Activated CD8-positive, alpha-beta T cell treated with anti-CD3 and anti-CD28 coated beads for 36 hours (primary cell): ENCODE measurements at regions of chr3 and their contacts with region 1.

Region 1: GRCh38 chr3:111717601-111718000 is 122.5 kb upstream of the ZBED2 start:
- DNase-seq: peak; percentile 84
- ATAC-seq: peak; percentile 94
- H3K4me3 Mint-ChIP-seq: no peak overlapping the region
- H3K27ac Mint-ChIP-seq: no peak overlapping the region
- H3K4me1 Mint-ChIP-seq: no peaks in the 10 kb centered on the region
- H3K27me3 Mint-ChIP-seq: no peaks in the 10 kb centered on the region
- CTCF ChIP-seq: peak; percentile 85

Region 2: GRCh38 chr3:111577794-111578685 is 139.6 kb before region 1 on chr3:
- CTCF ChIA-PET with region 1: interaction called, 30 read pairs
- POLR2A ChIA-PET with region 1: no interaction called
- intact Hi-C with region 1: no loop called
- DNase-seq: no peak
- ATAC-seq: peak; percentile 88
- H3K4me3 Mint-ChIP-seq: no peak overlapping the region
- H3K27ac Mint-ChIP-seq: peak overlapping the region; percentile 73
- H3K4me1 Mint-ChIP-seq: peaks cover 80% of the 10 kb centered on the region
- H3K27me3 Mint-ChIP-seq: no peaks in the 10 kb centered on the region
- CTCF ChIP-seq: peak; percentile 64

Region 3: DNA sequence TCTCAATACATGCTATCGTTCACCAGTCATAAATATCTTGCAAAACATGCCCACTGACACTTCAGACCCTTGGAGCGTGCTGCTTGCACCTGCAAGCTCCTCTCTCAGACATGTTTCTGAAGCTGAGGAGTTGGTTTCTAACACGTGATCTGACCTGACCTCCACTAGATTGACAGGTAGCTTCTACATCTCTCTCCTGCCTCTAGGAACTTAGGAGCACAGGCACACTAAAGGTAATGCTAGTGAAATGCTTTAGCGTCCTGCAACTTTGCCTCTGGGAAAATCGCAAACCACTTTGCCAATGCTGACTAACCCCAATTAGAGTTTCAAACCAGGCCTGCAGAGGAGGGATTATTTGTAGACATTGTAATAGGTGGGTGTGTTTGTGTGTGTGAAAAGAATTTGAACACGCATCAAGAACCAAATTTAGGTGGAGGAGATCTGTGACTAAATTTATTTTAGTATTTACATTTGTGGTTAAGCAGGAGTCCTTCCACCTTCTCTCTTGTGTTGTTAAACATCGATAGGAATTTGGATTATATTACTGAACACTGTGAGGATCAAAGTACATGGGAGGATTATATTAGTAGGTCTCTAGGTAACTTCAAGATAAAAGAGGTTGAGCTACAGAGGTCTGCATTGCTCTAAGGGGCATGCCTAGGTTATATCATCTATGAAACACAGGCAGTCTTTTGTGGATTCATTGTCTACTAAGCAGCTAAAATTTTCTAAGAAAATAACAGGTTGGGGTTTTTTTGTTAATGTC is 35.8 kb before region 1 on chr3:
- CTCF ChIA-PET with region 1: interaction called, 10 read pairs
- POLR2A ChIA-PET with region 1: interaction called, 3 read pairs
- intact Hi-C with region 1: no loop called
- DNase-seq: no peak
- ATAC-seq: no peak
- H3K4me3 Mint-ChIP-seq: no peak overlapping the region
- H3K27ac Mint-ChIP-seq: no peak overlapping the region
- H3K4me1 Mint-ChIP-seq: peaks cover 70% of the 10 kb centered on the region
- H3K27me3 Mint-ChIP-seq: no peaks in the 10 kb centered on the region
- CTCF ChIP-seq: no peak

Region 4: GRCh38 chr3:111700054-111700453 is 17.5 kb before region 1 on chr3:
- CTCF ChIA-PET with region 1: interaction called, 65 read pairs
- POLR2A ChIA-PET with region 1: no interaction called
- intact Hi-C with region 1: no loop called
- DNase-seq: peak; percentile 23
- ATAC-seq: peak; percentile 18
- H3K4me3 Mint-ChIP-seq: peak overlapping the region; percentile 34
- H3K27ac Mint-ChIP-seq: peak overlapping the region; percentile 75
- H3K4me1 Mint-ChIP-seq: peaks cover 32% of the 10 kb centered on the region
- H3K27me3 Mint-ChIP-seq: no peaks in the 10 kb centered on the region
- CTCF ChIP-seq: no peak

Region 5: DNA sequence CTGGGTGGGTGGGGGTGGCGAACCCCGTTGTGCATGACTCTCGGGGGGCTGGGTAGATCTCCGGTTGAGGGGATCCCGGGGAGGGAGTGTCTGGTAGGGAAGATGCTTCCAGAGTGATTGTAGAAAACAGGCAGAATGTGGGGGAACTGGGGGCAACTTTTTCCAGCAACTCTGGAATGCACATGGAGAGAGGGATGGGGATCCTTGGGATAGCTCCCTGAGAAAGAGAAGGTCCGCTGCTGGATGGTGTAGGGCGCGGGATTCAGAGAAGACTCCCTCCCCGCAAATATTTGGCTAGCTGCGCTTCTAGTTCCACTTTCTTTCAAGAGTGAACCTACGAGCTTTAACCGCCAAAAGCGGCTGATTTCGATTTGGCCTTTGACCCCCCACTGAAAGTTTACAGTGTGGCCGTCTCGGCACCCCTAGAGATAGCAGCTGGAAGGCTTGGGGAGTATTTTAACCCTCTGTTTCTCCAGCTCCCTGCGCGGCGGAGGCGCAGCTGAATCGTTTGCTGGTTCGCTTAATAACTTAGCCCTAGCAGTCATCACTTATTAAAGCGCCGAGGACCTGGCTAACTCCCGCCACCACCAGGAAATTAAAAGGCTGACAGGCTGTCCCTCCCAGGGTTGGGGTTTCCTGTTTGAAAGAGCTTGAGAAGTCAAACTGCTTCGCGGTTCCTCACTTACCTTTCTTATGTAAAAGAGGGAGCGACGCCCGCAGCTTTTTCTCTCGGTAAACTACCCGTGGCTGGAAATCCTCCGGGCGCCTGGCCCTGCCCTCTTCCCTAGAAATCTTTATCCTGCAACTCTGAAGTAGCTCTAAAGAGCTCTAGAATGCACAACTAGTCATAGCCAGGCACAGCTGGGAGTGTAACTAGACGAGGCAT is 142.6 kb after region 1 on chr3:
- CTCF ChIA-PET with region 1: interaction called, 58 read pairs
- POLR2A ChIA-PET with region 1: no interaction called
- intact Hi-C with region 1: loop called (anchors 10 kb)
- DNase-seq: peak; percentile 75
- ATAC-seq: peak; percentile 72
- H3K4me3 Mint-ChIP-seq: peak overlapping the region; percentile 92
- H3K27ac Mint-ChIP-seq: peak overlapping the region; percentile 57
- H3K4me1 Mint-ChIP-seq: peaks cover 7% of the 10 kb centered on the region
- H3K27me3 Mint-ChIP-seq: peaks cover 22% of the 10 kb centered on the region
- CTCF ChIP-seq: peak; percentile 47

Region 6: DNA sequence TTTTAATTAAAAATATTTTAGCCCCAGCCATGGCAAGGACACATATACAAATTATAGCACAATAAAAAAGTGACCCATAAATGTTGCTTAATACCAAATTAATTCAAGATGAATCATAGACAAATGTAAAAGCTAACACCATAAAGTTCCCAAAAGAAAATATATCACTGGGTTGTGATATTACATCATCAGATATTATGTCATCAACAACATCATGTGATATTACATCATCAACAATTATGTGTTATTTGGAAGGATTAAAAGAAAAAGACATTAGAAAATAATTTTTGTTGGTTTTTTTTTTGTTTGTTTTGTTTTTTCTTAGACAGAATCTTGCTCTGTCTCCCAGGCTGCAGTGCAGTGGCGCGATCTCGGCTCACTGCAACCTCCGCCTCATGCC is 226.8 kb after region 1 on chr3:
- CTCF ChIA-PET with region 1: no interaction called
- POLR2A ChIA-PET with region 1: no interaction called
- intact Hi-C with region 1: no loop called
- DNase-seq: no peak
- ATAC-seq: no peak
- H3K4me3 Mint-ChIP-seq: no peak overlapping the region
- H3K27ac Mint-ChIP-seq: no peak overlapping the region
- H3K4me1 Mint-ChIP-seq: no peaks in the 10 kb centered on the region
- H3K27me3 Mint-ChIP-seq: no peaks in the 10 kb centered on the region
- CTCF ChIP-seq: no peak

Region 7: GRCh38 chr3:111978493-111979433 is 261.2 kb after region 1 on chr3 and contains the start of gene ABHD10:
- CTCF ChIA-PET with region 1: interaction called, 318 read pairs
- POLR2A ChIA-PET with region 1: interaction called, 3 read pairs
- intact Hi-C with region 1: no loop called
- DNase-seq: peak; percentile 98
- ATAC-seq: peak; percentile 94
- H3K4me3 Mint-ChIP-seq: peak within 1 kb of the TSS; percentile 92
- H3K27ac Mint-ChIP-seq: peak within 1 kb of the TSS; percentile 92
- H3K4me1 Mint-ChIP-seq: peaks cover 37% of the 10 kb centered on the region
- H3K27me3 Mint-ChIP-seq: no peaks in the 10 kb centered on the region
- CTCF ChIP-seq: no peak
- total RNA-seq, gene ABHD10: 59.4 to 66.5 TPM

Region 8: DNA sequence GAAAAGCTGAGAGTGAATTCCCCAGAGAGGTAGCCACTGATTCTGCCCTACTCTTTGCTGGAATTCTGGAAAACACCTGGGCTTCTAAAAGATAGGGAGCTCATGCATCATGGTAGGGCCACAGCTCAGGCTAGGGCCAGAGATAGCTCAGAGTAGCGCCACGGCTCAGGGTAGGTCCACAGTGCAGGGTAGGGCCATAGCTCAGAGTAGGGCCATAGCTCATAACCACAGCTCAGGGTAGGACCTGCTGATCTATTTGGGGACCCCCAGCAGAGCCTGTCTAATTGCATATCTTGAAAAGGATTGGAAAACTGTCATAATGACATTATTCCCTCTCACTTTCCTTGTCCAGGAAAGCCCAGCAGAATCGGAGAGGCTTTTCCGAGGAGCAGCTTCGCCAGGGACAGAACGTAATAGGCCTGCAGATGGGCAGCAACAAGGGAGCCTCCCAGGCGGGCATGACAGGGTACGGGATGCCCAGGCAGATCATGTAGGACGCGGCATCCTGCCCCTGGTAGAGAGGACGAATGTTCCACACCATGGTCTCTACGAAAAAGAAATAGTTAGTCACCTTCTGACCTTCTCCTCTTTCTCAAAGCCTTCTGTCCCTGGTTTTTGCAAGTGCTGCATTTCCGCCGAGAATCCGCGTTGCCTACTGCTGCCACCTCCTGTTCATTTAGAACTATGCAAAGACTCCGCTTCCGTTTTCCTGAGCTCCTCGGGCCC is 295.6 kb after region 1 on chr3:
- CTCF ChIA-PET with region 1: interaction called, 122 read pairs
- POLR2A ChIA-PET with region 1: interaction called, 3 read pairs
- intact Hi-C with region 1: no loop called
- DNase-seq: peak; percentile 83
- ATAC-seq: peak; percentile 93
- H3K4me3 Mint-ChIP-seq: no peak overlapping the region
- H3K27ac Mint-ChIP-seq: peak overlapping the region; percentile 43
- H3K4me1 Mint-ChIP-seq: peaks cover 21% of the 10 kb centered on the region
- H3K27me3 Mint-ChIP-seq: no peaks in the 10 kb centered on the region
- CTCF ChIP-seq: peak; percentile 86